ENCODE measurements at regions of chr3 and their contacts with region 1.

Region 1: DNA sequence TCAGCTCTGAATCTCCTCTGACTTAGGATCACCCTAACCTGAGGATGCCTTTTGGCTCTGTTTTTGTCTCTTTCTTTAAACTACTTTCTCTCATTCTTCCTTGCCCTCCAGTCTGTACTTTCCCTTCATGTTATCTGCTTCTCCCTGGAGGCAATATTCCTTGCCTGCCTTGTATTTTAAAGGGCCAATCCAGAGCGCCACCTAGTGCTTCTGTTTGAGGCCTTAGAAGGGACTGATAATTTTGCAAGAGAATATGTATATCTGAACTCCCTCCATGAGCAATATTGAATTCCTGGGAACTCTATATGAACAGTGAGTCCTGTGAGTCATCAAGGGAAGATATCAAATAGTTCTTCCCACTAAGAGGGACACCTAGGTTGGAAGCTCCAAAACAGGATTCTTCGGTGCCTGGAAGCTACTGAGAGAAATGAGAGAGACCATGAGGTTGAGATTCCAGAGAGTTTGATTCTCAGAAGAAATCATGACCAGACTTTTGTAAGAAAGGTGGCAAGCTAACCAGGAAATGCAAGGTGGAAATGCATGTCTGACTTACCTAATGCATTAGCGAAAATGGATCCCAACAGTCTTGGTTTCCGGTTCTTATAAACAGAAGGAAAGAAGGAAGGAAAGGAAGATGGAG is 203.8 kb upstream of the CD96 start:
- DNase-seq: peak; percentile 70
- H3K4me3 Mint-ChIP-seq: no peak overlapping the region
- H3K27ac Mint-ChIP-seq: no peak overlapping the region
- H3K4me1 Mint-ChIP-seq: peaks cover 15% of the 10 kb centered on the region
- H3K27me3 Mint-ChIP-seq: peaks cover 3% of the 10 kb centered on the region

Region 2: GRCh38 chr3:109731620-109732473 is 1606.3 kb before region 1 on chr3:
- CTCF ChIA-PET with region 1: no interaction called
- intact Hi-C with region 1: loop called (anchors 5 kb)
- DNase-seq: peak; percentile 77
- H3K4me3 Mint-ChIP-seq: no peak overlapping the region
- H3K27ac Mint-ChIP-seq: no peak overlapping the region
- H3K4me1 Mint-ChIP-seq: peaks cover 3% of the 10 kb centered on the region
- H3K27me3 Mint-ChIP-seq: no peaks in the 10 kb centered on the region

Region 3: DNA sequence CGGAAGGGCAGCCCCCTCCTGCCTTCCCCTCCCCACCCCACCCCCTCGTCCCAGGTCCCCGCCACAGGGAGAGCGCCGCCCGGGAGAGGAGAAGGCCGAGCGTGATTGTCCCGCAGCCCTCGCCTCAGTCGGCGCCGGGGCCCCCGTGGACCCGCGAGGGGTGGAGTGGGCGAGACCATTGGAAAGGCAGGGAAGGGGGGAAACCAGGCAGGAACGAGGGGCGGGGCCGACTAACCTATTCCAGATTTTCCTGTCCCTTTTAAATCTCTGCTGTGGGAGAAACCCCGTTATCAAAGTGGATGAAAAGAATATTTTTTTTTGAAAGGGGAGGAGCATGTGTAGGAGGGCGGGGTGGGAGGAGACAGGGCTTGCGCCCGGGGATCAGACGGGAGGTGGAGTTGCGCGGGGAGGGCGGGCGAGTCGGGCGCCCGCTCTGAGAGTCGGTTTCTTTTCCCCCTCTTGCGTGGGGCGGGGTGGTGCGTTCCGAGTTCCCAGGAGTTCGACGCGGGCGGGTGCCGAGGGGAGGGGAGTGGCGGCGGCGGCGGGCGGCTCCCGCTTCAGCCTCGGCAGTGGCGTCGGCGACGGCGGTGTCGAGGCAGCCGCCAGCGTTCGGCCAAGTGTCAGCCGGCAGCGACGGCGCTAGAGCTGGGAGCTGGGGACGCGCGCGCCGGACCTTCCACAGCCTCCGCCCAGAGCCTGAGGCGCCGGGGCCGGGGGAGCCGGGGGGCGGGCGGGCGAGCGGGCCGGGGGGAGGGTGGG is 266.7 kb before region 1 on chr3 and contains the start of gene NECTIN3:
- CTCF ChIA-PET with region 1: no interaction called
- intact Hi-C with region 1: loop called (anchors 2 kb)
- DNase-seq: peak; percentile 91
- H3K4me3 Mint-ChIP-seq: peak within 1 kb of the TSS; percentile 85
- H3K27ac Mint-ChIP-seq: peak within 1 kb of the TSS; percentile 27
- H3K4me1 Mint-ChIP-seq: peaks cover 24% of the 10 kb centered on the region
- H3K27me3 Mint-ChIP-seq: peaks cover 40% of the 10 kb centered on the region
- total RNA-seq, gene NECTIN3: 3.0 to 3.5 TPM

Region 4: GRCh38 chr3:111277226-111277625 is 61.0 kb before region 1 on chr3:
- CTCF ChIA-PET with region 1: no interaction called
- intact Hi-C with region 1: loop called (anchors 1 kb)
- DNase-seq: no peak
- H3K4me3 Mint-ChIP-seq: no peak overlapping the region
- H3K27ac Mint-ChIP-seq: no peak overlapping the region
- H3K4me1 Mint-ChIP-seq: peaks cover 19% of the 10 kb centered on the region
- H3K27me3 Mint-ChIP-seq: no peaks in the 10 kb centered on the region

Region 5: DNA sequence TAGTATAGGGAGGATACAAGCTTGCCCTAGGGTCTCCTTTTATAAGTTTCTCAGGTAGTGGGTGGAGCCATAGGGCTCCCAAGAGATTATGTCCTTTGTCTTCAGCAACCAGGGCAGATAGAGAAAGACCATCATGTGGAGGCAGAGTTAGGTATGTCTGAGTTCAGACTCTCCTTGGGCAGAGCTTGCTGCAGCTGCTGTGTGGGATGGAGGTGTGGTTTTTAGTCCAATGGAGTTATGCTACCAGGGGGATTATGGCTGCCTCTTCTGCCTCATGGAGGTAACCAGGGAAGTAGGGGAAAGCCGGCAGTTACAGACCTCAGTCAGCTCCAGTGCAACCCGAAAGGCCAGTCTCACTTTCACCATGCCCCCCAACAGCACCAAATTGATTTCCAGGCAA is 46.1 kb before region 1 on chr3:
- CTCF ChIA-PET with region 1: no interaction called
- intact Hi-C with region 1: no loop called
- DNase-seq: no peak
- H3K4me3 Mint-ChIP-seq: no peak overlapping the region
- H3K27ac Mint-ChIP-seq: no peak overlapping the region
- H3K4me1 Mint-ChIP-seq: peaks cover 1% of the 10 kb centered on the region
- H3K27me3 Mint-ChIP-seq: no peaks in the 10 kb centered on the region

Region 6: DNA sequence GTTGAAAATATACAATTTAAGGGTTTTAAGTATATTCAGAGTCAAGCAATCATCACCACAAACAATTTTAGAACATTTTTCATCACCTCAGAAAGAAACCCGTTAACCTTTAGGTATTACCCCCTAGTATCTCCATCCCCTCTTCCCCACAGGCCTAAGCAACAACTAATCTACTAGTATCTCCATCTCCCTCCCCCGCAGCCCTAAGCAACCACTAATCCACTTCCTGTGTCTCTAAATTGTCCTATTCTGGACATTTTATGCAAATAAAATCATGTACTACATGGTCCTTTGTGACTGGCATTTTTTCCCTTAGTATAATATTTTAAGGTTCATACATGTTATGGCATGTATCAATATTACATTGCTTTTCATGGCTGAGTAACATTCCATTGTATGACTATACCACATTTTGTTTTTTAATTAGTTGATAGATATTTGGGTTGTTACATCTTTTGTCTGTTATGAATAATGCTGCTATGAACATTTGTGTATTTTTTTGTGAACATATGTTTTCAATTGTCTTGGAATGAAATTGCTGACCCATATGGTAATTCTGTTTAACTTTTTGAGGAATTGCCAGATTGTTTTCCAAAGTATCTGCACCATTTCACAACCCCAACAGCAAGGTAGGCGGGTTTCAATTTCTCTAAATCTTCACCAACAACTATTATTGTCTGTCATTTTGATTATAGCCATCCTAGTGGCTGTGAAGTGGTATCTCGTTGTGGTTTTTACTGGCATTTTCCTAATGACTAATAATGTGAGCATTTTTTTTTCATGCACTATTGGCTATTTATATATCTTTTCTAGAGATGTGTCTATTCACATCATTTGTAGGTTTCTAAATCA is 11.8 kb before region 1 on chr3:
- CTCF ChIA-PET with region 1: interaction called, 3 read pairs
- intact Hi-C with region 1: loop called (anchors 1 kb)
- DNase-seq: no peak
- H3K4me3 Mint-ChIP-seq: no peak overlapping the region
- H3K27ac Mint-ChIP-seq: no peak overlapping the region
- H3K4me1 Mint-ChIP-seq: peaks cover 34% of the 10 kb centered on the region
- H3K27me3 Mint-ChIP-seq: no peaks in the 10 kb centered on the region

Measured in activated naive CD4-positive, alpha-beta T cell treated with anti-CD3 and anti-CD28 coated beads for 36 hours (primary cell).